Activated CD8-positive, alpha-beta memory T cell treated with anti-CD3 and anti-CD28 coated beads, Interleukin-2, amount 10 ng/mL, durations not matched to agents 7 days and 5 days (primary cell): ENCODE measurements at regions of chr10 and their contacts with region 1.

Region 1: GRCh38 chr10:122565728-122566206 is 5.2 kb downstream of the DMBT1 start:
- DNase-seq: peak; percentile 79
- ATAC-seq: peak; percentile 33
- H3K4me3 Mint-ChIP-seq: no peak overlapping the region
- H3K27ac Mint-ChIP-seq: no peak overlapping the region
- H3K4me1 Mint-ChIP-seq: peaks cover 11% of the 10 kb centered on the region
- H3K27me3 Mint-ChIP-seq: peaks cover 60% of the 10 kb centered on the region

Region 2: DNA sequence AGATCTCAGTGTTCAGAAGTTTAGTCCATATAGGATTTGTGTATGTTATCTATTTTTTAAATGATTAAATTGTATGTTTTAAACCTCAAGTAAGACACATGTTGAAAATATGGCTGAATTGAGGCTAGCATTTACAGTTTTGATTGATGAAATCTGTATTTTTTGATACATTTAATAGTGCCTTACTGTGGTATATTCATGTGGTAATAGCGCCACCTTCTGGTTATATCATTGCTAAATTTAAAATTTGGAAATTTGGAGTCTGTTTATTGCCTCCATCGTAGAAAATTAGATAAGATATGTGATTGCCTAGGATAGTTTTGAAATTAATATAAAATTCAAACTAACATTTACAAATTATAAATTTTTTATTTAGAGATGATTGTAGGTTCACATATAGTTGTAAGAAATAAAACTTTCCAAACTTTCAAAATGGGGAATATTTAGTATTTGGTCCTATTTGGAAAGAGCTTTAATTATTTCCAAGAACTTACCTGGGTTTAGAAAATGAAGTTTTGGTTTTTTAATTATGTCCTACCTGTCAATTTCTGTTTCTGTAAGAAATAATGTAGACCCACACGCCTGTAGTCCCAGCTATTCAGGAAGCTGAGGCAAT is 130.4 kb before region 1 on chr10:
- CTCF ChIA-PET with region 1: interaction called, 10 read pairs
- DNase-seq: no peak
- ATAC-seq: no peak
- H3K4me3 Mint-ChIP-seq: no peak overlapping the region
- H3K27ac Mint-ChIP-seq: no peak overlapping the region
- H3K4me1 Mint-ChIP-seq: no peaks in the 10 kb centered on the region
- H3K27me3 Mint-ChIP-seq: peaks cover 2% of the 10 kb centered on the region

Region 3: DNA sequence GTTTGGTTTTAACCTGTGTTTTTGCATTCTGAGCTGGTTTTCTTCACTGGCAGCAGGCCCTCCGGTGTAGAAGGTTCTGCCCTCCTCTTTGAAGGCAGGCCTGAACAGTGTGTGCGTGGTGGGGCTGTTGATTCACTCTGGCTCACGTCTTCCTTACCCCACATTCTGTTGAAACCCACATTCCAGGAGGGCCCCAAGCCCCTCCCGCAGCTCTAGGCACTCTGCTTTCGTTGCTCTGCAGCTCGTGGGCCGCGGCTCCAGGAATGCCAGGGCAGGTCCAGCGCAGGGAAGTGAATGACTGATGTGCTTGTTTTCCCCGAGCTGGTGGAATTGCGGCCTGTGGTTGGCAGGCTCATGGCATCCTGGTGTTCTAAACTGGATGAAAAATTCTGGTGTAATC is 55.4 kb before region 1 on chr10:
- CTCF ChIA-PET with region 1: interaction called, 19 read pairs
- DNase-seq: no peak
- ATAC-seq: no peak
- H3K4me3 Mint-ChIP-seq: no peak overlapping the region
- H3K27ac Mint-ChIP-seq: no peak overlapping the region
- H3K4me1 Mint-ChIP-seq: peaks cover 21% of the 10 kb centered on the region
- H3K27me3 Mint-ChIP-seq: peaks cover 10% of the 10 kb centered on the region

Region 4: GRCh38 chr10:122541541-122542002 is 24.2 kb before region 1 on chr10:
- CTCF ChIA-PET with region 1: interaction called, 14 read pairs
- DNase-seq: no peak
- ATAC-seq: no peak
- H3K4me3 Mint-ChIP-seq: no peak overlapping the region
- H3K27ac Mint-ChIP-seq: no peak overlapping the region
- H3K4me1 Mint-ChIP-seq: peaks cover 57% of the 10 kb centered on the region
- H3K27me3 Mint-ChIP-seq: peaks cover 33% of the 10 kb centered on the region